Dendritic cell treated with granulocyte-macrophage colony-stimulating factor and Interleukin-4, amounts not matched to agents 40 ng/mL and 50 ng/mL, for 4 days (primary cell): ENCODE measurements at regions of chr9 and their contacts with region 1.

Region 1: DNA sequence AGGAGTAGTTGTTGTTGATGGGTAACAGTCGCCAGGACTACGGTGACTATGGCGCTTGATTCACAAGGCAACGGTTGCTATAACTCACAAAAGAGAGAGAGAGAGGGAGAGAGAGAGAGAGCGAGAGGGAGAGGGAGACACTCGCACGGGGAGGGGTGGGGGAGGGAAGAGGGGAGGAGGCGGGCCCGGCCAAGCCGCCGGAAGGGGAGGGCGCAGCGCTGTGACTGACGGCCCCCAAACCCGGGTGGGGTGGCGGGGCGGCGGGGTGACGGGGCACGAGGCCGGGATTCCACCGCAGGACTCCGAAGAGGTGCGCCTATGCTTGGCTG is at the start of gene RFX3:
- H3K4me3 Mint-ChIP-seq: peak within 1 kb of the TSS; percentile 96
- H3K27ac Mint-ChIP-seq: peak within 1 kb of the TSS; percentile 100
- H3K4me1 Mint-ChIP-seq: peaks cover 38% of the 10 kb centered on the region
- H3K27me3 Mint-ChIP-seq: no peaks in the 10 kb centered on the region

Region 2: GRCh38 chr9:2849941-2850340 is 675.9 kb before region 1 on chr9:
- intact Hi-C with region 1: loop called (anchors 10 kb)
- H3K4me3 Mint-ChIP-seq: no peak overlapping the region
- H3K27ac Mint-ChIP-seq: no peak overlapping the region
- H3K4me1 Mint-ChIP-seq: no peaks in the 10 kb centered on the region
- H3K27me3 Mint-ChIP-seq: peaks cover 11% of the 10 kb centered on the region

Region 3: DNA sequence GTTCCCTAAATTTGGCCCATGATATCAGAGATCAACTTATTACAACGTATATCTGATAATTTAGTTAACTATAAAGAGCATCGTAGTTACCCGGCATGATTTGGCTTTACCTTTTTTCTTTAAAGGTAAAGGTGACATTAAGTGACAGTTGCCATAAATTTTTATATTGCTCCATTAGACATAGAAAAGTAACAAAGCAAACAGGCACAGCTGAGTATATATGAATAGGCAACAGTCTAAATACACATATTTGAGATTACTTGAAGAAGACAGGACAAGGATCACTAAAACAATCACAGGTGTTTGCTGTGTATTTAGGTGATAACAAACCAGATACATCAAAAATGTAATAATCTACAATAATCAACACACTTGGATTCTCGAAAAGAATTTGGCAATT is 34.8 kb before region 1 on chr9:
- intact Hi-C with region 1: no loop called
- H3K4me3 Mint-ChIP-seq: no peak overlapping the region
- H3K27ac Mint-ChIP-seq: no peak overlapping the region
- H3K4me1 Mint-ChIP-seq: no peaks in the 10 kb centered on the region
- H3K27me3 Mint-ChIP-seq: no peaks in the 10 kb centered on the region

Region 4: GRCh38 chr9:3508521-3509291 is 17.1 kb before region 1 on chr9:
- intact Hi-C with region 1: loop called (anchors 1 kb)
- H3K4me3 Mint-ChIP-seq: peak overlapping the region; percentile 40
- H3K27ac Mint-ChIP-seq: peak overlapping the region; percentile 80
- H3K4me1 Mint-ChIP-seq: peaks cover 17% of the 10 kb centered on the region
- H3K27me3 Mint-ChIP-seq: no peaks in the 10 kb centered on the region

Region 5: GRCh38 chr9:3585606-3586005 is 59.8 kb after region 1 on chr9:
- intact Hi-C with region 1: no loop called
- H3K4me3 Mint-ChIP-seq: no peak overlapping the region
- H3K27ac Mint-ChIP-seq: no peak overlapping the region
- H3K4me1 Mint-ChIP-seq: peaks cover 7% of the 10 kb centered on the region
- H3K27me3 Mint-ChIP-seq: no peaks in the 10 kb centered on the region

Region 6: DNA sequence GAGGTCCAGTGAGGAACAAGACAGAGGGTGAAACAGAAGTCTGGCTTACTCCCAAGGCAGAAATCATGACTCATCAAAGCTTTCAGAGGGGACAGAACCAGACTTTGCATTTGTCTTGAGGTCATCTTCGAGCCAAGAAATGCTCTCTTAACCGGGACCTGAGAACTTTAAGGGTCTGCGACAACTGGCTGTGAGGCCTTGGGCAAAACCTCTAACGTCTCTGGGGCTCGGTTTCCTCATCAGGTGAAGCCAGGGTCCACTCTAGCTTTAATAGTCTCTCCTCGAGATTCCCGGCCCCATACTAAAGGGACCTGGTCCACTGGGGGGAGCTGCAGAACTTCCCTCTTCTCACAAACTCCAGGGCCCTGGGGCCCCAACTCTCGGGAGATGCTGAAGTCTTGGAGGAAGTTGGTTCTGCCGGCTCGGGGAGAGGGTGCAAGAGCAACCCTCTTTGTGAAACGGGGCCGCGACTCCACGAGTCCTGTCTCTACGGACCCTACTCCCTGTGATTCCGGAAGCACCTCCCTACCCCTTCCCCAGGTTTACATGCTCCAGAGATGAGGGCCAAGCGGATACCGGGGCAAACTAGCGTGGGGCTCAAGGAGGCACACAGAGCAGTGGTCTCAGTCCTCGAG is 771.5 kb after region 1 on chr9:
- intact Hi-C with region 1: loop called (anchors 5 kb)
- H3K4me3 Mint-ChIP-seq: peak overlapping the region; percentile 98
- H3K27ac Mint-ChIP-seq: peak overlapping the region; percentile 86
- H3K4me1 Mint-ChIP-seq: peaks cover 39% of the 10 kb centered on the region
- H3K27me3 Mint-ChIP-seq: peaks cover 43% of the 10 kb centered on the region